PC-3 (cell line): ENCODE measurements at regions of chr13 and their contacts with region 1.

Region 1: GRCh38 chr13:45950386-45951000 is 98.9 kb upstream of the SIAH3 start:
- DNase-seq: no peak
- ATAC-seq: no peak
- H3K4me3 ChIP-seq: no peak overlapping the region
- H3K27ac ChIP-seq: no peak overlapping the region
- H3K4me1 ChIP-seq: no peaks in the 10 kb centered on the region
- H3K27me3 ChIP-seq: no peaks in the 10 kb centered on the region
- CTCF ChIP-seq: no peak

Region 2: GRCh38 chr13:44801990-44802389 is 1148.5 kb before region 1 on chr13:
- CTCF ChIA-PET with region 1: no interaction called
- POLR2A ChIA-PET with region 1: no interaction called
- intact Hi-C with region 1: no loop called
- DNase-seq: peak; percentile 76
- ATAC-seq: peak; percentile 93
- H3K4me3 ChIP-seq: no peak overlapping the region
- H3K27ac ChIP-seq: peak overlapping the region; percentile 48
- H3K4me1 ChIP-seq: peaks cover 18% of the 10 kb centered on the region
- H3K27me3 ChIP-seq: no peaks in the 10 kb centered on the region
- CTCF ChIP-seq: no peak

Region 3: DNA sequence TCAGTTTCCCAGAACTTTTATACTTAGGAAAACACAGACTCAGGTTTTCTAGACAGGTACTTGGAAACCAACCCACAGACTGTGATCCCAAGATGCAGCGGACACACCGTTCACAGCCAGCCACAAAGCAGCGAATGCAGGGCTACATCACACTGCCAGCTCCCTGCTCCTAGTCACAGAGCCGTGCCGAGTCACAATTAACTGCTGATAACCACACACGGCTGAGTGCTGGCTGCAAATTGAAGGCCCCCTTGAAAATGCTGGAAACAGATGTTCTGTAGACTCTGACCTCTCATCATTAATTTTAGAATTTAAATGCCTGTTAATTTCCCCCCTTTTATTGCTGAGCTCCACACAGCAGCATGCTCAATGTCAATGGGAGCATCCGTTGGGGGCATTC is 20.3 kb before region 1 on chr13:
- CTCF ChIA-PET with region 1: no interaction called
- POLR2A ChIA-PET with region 1: no interaction called
- intact Hi-C with region 1: loop called (anchors 1 kb)
- DNase-seq: no peak
- ATAC-seq: no peak
- H3K4me3 ChIP-seq: no peak overlapping the region
- H3K27ac ChIP-seq: no peak overlapping the region
- H3K4me1 ChIP-seq: no peaks in the 10 kb centered on the region
- H3K27me3 ChIP-seq: peaks cover 35% of the 10 kb centered on the region
- CTCF ChIP-seq: no peak